GM12878 (cell line): ENCODE measurements at regions of chr13 and their contacts with region 1.

Region 1: DNA sequence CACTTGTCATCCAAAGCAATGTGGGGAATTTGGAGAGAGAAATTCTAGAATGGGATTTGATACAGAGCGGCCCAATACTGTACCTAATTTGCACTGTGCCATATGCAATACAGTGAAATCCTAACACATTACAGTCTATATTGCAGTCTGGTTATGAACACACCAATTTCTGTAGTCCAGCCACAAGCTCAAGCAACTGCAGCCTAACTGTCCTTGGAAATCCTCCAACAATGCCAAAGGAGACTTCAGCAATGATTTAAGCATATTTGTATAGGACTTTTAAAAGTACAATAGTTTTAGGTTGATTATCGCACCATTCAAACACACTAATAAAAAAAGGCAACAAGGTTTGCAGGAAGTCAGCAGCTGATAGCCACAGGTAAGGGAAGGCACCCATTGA is 17.3 kb downstream of the DIAPH3 start:
- DNase-seq: no peak
- ATAC-seq: no peak
- H3K4me3 ChIP-seq: no peak overlapping the region
- H3K27ac ChIP-seq: no peak overlapping the region
- H3K4me1 ChIP-seq: no peaks in the 10 kb centered on the region
- H3K27me3 ChIP-seq: no peaks in the 10 kb centered on the region
- CTCF ChIP-seq: no peak
- EP300 ChIP-seq: no peak
- POLR2A ChIP-seq: no peak
- RAD21 ChIP-seq: no peak

Region 2: DNA sequence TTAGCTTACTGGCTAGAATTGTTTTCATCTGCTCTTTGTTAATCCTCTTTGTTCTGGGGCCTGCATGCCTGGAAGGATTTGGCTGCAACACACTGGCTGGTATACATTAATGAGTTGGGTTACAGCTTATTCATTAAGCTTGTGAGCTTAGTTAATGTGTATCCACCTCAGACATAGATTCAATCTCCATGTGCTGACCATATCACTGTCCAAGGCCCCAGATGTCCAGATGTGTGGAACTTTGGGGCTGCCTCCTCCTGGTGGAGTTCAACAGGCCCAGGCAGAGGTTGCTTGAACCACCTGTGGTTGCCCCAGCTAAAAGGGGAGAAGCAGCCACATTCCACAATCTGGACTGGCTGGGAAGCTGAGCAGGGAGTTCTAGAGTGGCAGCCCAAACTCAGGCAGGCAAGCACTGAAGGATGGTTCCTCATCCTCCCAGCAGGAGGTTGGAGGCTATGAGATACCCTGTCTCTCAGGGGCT is 11.9 kb after region 1 on chr13:
- CTCF ChIA-PET with region 1: interaction called, 4 read pairs
- POLR2A ChIA-PET with region 1: interaction called, 3 read pairs
- RAD21 ChIA-PET with region 1: no interaction called
- SMC1A ChIA-PET with region 1: interaction called, 10 read pairs
- in situ Hi-C with region 1: no loop called
- intact Hi-C with region 1: no loop called
- DNase-seq: no peak
- ATAC-seq: peak; percentile 7
- H3K4me3 ChIP-seq: no peak overlapping the region
- H3K27ac ChIP-seq: no peak overlapping the region
- H3K4me1 ChIP-seq: no peaks in the 10 kb centered on the region
- H3K27me3 ChIP-seq: no peaks in the 10 kb centered on the region
- CTCF ChIP-seq: no peak
- EP300 ChIP-seq: no peak
- POLR2A ChIP-seq: no peak
- RAD21 ChIP-seq: no peak